Panc1 (cell line): ENCODE measurements at regions of chr16 and their contacts with region 1.

Region 1: DNA sequence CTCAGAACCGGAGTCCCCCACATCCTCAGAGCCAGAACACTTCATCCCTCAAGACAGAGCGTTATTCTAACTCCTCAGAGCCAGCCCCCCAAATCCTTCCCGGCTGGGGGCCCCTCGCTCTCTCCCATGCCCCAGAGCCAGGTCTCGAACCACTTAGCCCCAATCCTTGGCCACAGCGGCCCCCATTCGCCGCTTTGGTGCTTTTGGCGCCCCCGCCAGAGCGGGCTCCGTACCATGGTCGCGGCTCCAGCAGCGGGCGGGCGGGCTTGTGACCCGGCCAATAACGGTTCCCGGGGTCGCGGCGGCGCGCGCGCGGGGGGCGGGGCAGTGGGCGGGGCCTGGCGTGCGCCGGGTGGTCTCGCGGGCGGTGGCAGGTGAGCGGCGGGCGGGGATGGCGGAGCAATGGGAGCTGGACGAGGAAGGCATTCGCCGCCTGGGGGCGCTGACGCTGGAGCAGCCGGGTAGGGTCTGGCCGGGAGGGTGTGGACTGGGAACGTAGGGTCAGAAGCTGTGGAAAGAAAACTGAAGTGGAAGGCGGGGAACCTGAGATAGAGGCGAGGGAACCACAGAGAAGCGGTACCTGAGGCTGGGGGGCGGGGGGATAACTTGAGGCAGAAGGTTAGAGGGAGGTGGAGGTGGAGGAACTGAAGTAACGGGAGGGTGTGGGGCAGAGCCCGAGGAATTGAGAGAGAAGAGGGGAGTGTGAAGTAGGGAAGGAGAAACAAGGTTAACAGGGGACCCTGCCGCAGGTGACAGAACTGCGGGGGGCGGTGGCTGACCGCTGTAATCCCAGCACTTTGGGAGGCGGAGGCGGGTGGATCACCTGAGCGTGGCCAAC is at the starts of genes KCTD19 and LRRC36:
- DNase-seq: no peak
- ATAC-seq: peak; percentile 97
- H3K4me3 ChIP-seq: peak within 1 kb of the TSS; percentile 48 to 73
- H3K27ac ChIP-seq: no peak within 1 kb of the TSS
- H3K4me1 ChIP-seq: no peaks in the 10 kb centered on the region
- H3K27me3 ChIP-seq: no peaks in the 10 kb centered on the region
- CTCF ChIP-seq: peak; percentile 83
- total RNA-seq, gene KCTD19: 0.62 TPM
- total RNA-seq, gene LRRC36: 0.54 TPM

Region 2: GRCh38 chr16:67305216-67306071 is 21.2 kb before region 1 on chr16:
- CTCF ChIA-PET with region 1: no interaction called
- POLR2A ChIA-PET with region 1: no interaction called
- in situ Hi-C with region 1: no loop called
- intact Hi-C with region 1: loop called (anchors 1 kb)
- DNase-seq: no peak
- ATAC-seq: no peak
- H3K4me3 ChIP-seq: no peak overlapping the region
- H3K27ac ChIP-seq: no peak overlapping the region
- H3K4me1 ChIP-seq: no peaks in the 10 kb centered on the region
- H3K27me3 ChIP-seq: no peaks in the 10 kb centered on the region
- CTCF ChIP-seq: no peak

Region 3: DNA sequence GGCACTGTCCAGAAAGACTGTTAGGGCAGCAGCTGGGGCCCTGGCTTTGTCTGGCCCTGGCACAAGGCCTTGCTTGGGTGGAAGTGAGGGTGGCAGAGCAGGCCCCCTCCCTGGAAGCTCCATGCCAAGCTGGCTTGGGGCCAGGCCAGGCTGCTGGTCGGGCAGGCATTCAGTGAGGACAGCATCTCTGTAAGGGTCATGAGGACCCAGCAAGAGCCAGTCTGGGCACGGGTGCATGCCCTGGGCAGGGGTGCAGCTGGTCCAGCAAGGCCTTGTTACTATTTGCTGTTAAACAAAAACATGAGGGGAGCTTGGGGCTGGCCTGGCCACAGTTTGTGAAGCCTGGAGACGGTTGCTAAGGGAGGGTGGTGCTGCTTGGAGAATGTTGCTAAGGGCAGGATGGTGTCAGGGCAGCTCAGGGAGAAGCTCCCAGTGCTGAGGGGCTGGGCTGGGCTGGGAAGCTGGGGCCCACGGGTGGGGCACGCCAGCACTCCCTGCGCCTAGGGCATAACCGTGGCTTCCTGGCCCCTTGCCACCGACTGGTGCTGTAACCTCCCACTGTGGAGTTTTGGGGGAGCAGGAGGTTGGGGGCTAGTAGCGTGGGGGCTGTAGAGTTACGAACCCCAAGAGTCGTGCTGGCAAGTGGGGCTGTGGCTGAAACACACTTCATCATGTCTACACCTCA is 64.8 kb after region 1 on chr16:
- CTCF ChIA-PET with region 1: no interaction called
- POLR2A ChIA-PET with region 1: interaction called, 12 read pairs
- in situ Hi-C with region 1: no loop called
- intact Hi-C with region 1: no loop called
- DNase-seq: no peak
- ATAC-seq: no peak
- H3K4me3 ChIP-seq: no peak overlapping the region
- H3K27ac ChIP-seq: no peak overlapping the region
- H3K4me1 ChIP-seq: no peaks in the 10 kb centered on the region; the same call in 1 of the 2 replicates
- H3K27me3 ChIP-seq: no peaks in the 10 kb centered on the region
- CTCF ChIP-seq: no peak